ENCODE measurements at regions of chr11 and their contacts with region 1.

Region 1: DNA sequence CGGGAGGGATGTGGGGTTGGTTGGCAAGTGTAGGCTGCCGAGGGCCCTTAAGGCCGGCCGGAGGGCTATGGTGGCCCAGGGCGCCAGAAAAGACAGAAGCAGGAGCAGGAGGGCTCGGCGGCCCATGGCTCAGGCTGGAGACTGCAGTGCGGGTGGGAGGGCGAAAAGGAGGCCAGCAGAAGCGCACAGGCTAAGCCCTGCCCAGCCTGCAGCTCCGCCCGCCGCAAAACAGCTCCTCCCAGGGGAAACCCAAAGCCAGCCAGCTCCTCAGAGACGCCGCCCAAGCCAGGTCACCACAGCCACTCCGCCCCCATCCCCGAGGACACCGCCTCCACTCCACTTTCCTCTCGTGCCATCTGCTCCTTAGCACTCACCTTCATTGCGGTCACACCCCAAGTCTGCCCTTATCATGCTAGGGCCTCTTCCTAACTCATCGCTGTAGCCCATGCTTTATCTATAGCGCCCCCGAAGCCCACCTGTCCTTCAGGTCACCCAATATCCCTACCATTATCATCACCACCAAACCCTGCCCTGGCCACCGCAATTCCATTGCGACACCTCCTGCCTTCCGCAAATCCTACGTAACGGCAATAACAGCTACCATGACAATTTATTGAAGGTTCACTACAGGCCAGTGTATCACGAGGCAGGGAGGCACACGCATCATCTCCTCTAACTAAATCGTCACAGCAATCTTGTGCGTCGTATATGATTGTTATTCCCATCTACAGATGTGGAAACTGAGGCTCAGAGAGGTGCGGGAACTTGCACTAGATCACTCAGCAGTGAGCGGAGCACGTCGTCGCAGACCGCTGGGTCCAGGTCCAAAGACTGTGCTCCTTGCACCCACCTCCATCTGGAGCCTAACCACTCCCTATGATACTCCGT is at the start of gene PRCP:
- DNase-seq: peak; percentile 94
- H3K4me3 Mint-ChIP-seq: peak within 1 kb of the TSS; percentile 100
- H3K27ac Mint-ChIP-seq: peak within 1 kb of the TSS; percentile 100
- H3K4me1 Mint-ChIP-seq: peaks cover 55% of the 10 kb centered on the region
- H3K27me3 Mint-ChIP-seq: no peaks in the 10 kb centered on the region
- total RNA-seq, gene PRCP: 23.5 and 27.5 TPM in 2 replicates

Region 2: DNA sequence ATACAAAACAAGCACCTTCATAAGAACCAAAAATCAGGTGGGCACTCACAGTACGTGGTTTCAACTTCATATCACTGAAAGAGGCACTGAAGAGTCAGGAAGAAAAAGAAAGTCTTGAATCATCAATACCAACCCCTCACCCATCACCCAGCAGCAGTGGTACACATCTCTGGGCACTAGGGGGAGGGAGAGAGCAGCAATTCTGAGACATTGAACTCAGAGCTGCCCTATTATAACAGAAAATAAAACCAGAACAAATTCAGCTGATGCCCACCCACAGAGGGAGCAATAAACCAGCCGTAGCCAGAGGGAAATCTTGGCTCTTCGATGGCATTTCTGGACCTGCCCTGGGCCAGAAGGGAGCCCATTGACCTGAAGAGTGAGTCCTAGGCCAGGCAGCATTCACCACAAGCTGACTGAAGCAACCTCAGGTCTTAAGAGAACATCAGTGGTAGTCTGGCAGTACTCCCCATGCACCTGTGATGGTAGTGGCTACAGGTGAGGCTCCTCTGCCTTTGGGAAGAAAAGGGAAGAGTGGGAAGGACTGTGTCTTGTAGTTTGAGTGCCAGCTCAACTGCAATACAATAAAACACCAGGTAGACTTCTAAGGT is 124.7 kb before region 1 on chr11:
- intact Hi-C with region 1: loop called (anchors 1 kb)
- DNase-seq: peak; percentile 45
- H3K4me3 Mint-ChIP-seq: no peak overlapping the region
- H3K27ac Mint-ChIP-seq: no peak overlapping the region
- H3K4me1 Mint-ChIP-seq: peaks cover 1% of the 10 kb centered on the region
- H3K27me3 Mint-ChIP-seq: peaks cover 17% of the 10 kb centered on the region

Region 3: DNA sequence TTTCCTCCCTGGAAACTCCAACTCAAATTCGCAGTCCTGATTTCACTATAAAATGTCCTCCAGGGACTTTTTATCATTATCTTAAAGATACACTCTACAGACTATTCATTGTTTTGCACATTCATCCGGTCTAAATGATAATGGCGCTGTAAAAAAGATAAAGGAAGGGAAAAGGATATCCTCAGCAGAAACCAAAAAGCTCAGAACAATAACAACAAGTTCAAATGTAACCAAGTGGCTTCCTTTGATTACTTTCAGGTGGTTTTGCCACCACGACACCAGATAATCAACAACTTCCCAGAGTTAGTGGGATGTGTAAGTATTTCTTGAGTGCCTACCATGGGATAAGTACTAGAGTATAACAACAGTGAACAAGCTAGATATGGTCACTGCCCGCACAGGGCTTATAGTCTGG is 26.6 kb before region 1 on chr11:
- intact Hi-C with region 1: loop called (anchors 2 kb)
- DNase-seq: no peak
- H3K4me3 Mint-ChIP-seq: no peak overlapping the region
- H3K27ac Mint-ChIP-seq: no peak overlapping the region
- H3K4me1 Mint-ChIP-seq: peaks cover 22% of the 10 kb centered on the region
- H3K27me3 Mint-ChIP-seq: no peaks in the 10 kb centered on the region

Region 4: GRCh38 chr11:83007909-83008580 is 107.5 kb after region 1 on chr11:
- intact Hi-C with region 1: loop called (anchors 1 kb)
- DNase-seq: no peak
- H3K4me3 Mint-ChIP-seq: peak overlapping the region; percentile 61
- H3K27ac Mint-ChIP-seq: peak overlapping the region; percentile 65
- H3K4me1 Mint-ChIP-seq: peaks cover 47% of the 10 kb centered on the region
- H3K27me3 Mint-ChIP-seq: no peaks in the 10 kb centered on the region

Region 5: GRCh38 chr11:83033972-83034672 is 133.6 kb after region 1 on chr11:
- intact Hi-C with region 1: no loop called
- DNase-seq: no peak
- H3K4me3 Mint-ChIP-seq: no peak overlapping the region
- H3K27ac Mint-ChIP-seq: no peak overlapping the region
- H3K4me1 Mint-ChIP-seq: peaks cover 25% of the 10 kb centered on the region
- H3K27me3 Mint-ChIP-seq: no peaks in the 10 kb centered on the region

Region 6: DNA sequence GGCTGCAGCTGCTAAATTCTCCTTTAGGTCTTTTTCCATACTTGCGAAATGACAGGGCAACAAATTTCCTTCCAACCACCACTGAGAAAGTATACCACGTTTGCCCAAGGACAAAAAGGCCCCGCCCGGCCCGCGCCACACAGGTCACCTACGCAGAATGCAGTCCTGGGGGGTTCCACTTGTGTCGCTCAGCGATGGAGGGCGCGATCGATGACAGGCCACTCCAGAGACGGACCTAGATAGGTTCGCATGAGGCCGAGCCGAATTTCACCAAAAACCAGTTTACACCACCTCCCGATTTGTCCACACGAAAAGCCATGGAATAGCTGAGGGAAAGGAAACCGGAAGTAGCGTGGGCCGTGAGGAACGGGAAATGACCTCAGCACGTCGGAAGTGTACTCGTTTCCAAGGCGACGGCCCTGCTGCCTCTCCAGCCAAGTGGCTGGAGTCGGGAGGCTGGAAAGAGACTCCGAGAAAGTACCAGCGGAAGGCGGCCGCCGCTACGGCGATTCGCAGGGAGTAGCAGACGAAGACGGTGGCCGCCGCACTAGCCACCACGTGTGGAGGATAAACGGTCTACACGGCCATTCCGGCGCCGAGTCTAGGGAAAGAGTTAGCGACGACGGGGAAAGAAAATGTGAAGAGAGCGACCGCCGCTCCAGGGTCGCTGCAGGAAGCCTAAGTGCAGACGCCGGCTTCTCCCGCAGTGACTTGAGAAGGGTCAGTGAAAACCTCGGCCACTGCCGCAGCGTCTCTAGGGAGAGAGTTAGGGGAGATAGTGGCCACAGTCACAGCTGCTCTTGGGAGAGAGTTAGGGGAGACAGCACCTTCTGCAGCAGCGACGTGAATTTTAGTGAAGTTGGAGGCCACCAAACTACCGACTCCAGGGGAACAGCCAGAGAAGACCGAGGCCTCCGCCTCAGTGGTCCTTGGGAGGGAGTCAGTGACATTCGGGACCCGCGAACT is 293.1 kb after region 1 on chr11 and contains the start of gene ANKRD42:
- intact Hi-C with region 1: loop called (anchors 1 kb)
- DNase-seq: peak; percentile 82
- H3K4me3 Mint-ChIP-seq: peak within 1 kb of the TSS; percentile 99
- H3K27ac Mint-ChIP-seq: peak within 1 kb of the TSS; percentile 92
- H3K4me1 Mint-ChIP-seq: peaks cover 21% of the 10 kb centered on the region
- H3K27me3 Mint-ChIP-seq: no peaks in the 10 kb centered on the region
- total RNA-seq, gene ANKRD42: 3.7 TPM in 2 replicates

Measured in activated T-helper 2 cell treated with anti-CD3 and anti-CD28 coated beads, Interferon-gamma antibody, Interleukin-2, Interleukin-4, amounts not matched to agents 10 μg/mL and 5 μg/mL and 100 μg/mL, durations not matched to agents 14 hours and 24 hours and 36 hours (primary cell).